ENCODE measurements at regions of chr9 and their contacts with region 1.

Region 1: GRCh38 chr9:17802249-17802857 is 223.5 kb downstream of the SH3GL2 start:
- DNase-seq: no peak
- ATAC-seq: no peak
- H3K4me3 ChIP-seq: no peak overlapping the region
- H3K27ac ChIP-seq: no peak overlapping the region
- H3K4me1 ChIP-seq: no peaks in the 10 kb centered on the region
- H3K27me3 ChIP-seq: no peaks in the 10 kb centered on the region
- CTCF ChIP-seq: peak in 2 of 3 experiments; percentile 36 to 40; a peak in 5 of 6 replicates
- EP300 ChIP-seq: no peak
- POLR2A ChIP-seq: no peak
- RAD21 ChIP-seq: peak; percentile 38

Region 2: DNA sequence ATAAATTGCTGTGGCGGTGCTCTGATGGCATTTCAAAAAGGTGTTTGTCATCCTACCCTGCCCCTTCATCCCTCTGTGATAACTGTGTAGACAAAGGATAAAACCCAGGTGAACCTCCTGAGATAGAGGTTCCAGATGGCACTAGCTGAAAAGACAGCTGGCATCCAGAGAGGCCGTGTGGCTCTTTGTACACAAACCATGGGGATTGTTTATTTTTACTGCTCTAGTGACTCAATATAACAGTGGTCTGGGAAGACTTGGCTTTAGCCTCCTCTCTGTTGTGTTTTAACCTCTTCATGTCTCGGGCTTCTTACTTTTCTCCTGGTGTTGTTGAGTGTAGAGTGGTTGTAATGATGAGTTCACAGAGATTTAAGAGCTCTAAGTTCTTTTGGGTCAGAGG is 174.7 kb before region 1 on chr9:
- CTCF ChIA-PET with region 1: no interaction called
- POLR2A ChIA-PET with region 1: no interaction called
- RAD21 ChIA-PET with region 1: no interaction called
- SMC1A ChIA-PET with region 1: no interaction called
- in situ Hi-C with region 1: no loop called
- intact Hi-C with region 1: loop called (anchors 10 kb)
- DNase-seq: no peak
- ATAC-seq: no peak
- H3K4me3 ChIP-seq: no peak overlapping the region
- H3K27ac ChIP-seq: no peak overlapping the region
- H3K4me1 ChIP-seq: no peaks in the 10 kb centered on the region
- H3K27me3 ChIP-seq: no peaks in the 10 kb centered on the region
- CTCF ChIP-seq: no peak
- EP300 ChIP-seq: no peak
- POLR2A ChIP-seq: no peak
- RAD21 ChIP-seq: no peak

Measured in GM12878 (cell line).